ENCODE measurements at regions of chr5 and their contacts with region 1.

Region 1: DNA sequence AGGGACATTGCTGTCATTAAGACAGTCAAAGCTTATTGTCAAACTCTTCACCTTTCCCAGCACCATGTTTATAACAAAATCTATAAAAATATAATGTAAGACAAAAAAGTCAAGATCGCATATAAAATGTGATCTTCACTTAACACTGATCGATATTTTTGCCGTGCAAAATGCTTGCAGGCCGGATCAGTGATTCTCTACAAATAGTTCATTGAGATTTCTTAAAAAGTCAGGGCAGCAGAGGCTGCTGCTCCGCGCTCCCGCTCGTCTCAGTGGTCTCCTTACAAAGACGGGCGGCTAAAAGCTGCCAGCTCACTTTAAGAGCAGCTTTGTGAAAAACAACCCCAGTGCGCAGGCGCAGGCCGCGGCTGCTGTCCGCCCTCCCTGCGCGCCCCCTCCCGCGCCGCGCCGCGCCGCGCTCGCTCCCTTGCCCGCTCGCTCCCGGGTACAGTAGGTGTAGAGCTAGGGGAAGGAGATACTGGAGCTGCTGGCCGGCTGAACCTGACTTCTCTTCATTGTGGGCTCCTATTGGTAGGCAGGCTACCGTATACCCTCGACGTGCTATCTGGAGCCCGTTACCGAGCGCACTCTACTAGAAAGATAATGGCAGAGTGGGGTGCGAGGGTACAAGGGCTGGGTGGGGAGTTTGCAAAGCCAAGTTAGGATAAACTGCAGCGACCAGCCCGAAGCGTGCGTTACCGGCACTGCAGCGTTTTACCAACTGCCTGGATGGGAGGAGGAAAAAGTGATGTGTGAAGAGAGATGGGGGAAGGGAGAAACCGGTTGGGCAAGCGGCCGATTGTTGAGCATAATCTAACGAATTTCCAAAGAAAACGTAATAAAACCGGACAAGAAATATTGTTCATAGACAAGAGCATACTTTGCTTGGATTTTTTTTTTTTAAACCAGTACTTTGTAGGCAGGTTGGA is at the start of gene ARRDC3:
- DNase-seq: peak; percentile 93 to 96
- ATAC-seq: peak; percentile 48 to 70
- H3K4me3 ChIP-seq: peak within 1 kb of the TSS; percentile 67 to 96 (median 85)
- H3K27ac ChIP-seq: peak within 1 kb of the TSS; percentile 90 to 100 (median 94)
- H3K4me1 ChIP-seq: peaks cover 17 to 20% of the 10 kb centered on the region in 2 donors
- H3K27me3 ChIP-seq: no peaks in the 10 kb centered on the region
- CTCF ChIP-seq: peak in 1 of 5 experiments; percentile 24
- POLR2A ChIP-seq: peak; percentile 95 to 98
- total RNA-seq, gene ARRDC3: 64.1 to 116 (median 87.7) TPM

Region 2: DNA sequence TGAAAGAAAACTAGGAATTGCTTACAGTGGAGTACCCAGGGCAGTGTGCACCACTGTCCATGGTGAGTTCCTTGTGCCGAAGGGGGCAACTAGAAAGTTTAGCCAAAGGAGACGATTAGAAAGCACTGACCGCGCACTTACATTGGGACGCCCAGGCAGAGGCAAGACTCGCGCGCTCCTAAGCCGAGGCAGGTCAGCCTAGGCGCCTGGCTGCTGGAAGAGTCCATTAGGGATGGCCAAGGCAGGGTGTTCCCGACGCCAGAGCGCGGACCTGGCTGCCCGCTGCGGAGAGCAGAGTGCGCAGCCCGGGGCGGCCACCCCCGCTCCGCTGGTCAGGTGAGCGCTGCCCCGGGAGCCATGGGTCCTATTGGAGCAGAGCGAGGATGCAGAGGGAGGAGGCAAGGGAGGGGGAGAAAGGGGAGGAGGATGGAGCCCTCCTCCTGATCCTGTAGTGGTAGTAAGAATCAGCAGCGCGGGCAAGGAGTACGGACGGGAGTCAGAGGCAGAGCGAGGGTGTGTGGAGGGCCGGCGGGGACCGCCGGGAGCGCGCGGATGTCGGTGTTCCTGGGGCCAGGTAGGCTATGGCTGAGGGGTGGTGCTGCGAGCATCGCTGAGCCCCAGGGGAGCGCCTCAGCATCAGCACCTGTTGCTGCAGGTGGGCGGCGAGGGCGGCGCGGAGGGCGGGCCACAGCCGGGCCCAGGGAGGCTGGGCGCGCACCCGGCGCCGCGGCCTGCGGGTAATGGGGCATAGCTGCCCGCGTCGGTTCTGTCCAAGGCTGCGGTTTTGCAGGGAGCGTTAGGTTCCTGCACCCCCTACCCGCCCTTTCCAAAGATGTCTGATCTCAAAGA is 824.7 kb before region 1 on chr5 and contains the start of gene ADGRV1:
- in situ Hi-C with region 1: no loop called
- intact Hi-C with region 1: no loop called
- DNase-seq: peak in 1 of 2 donors; percentile 11
- ATAC-seq: peak in 1 of 2 donors; percentile 44
- H3K4me3 ChIP-seq: peak within 1 kb of the TSS; percentile 9 to 46 (median 39)
- H3K27ac ChIP-seq: no peak within 1 kb of the TSS
- H3K4me1 ChIP-seq: peaks cover 7% of the 10 kb centered on the region in 2 donors
- H3K27me3 ChIP-seq: peaks cover 39 to 42% (median 39%) of the 10 kb centered on the region in 3 donors
- CTCF ChIP-seq: no peak
- POLR2A ChIP-seq: no peak
- total RNA-seq, gene ADGRV1: 0.22 to 0.41 TPM in 2 of 4 donors, not detected in the others

Region 3: DNA sequence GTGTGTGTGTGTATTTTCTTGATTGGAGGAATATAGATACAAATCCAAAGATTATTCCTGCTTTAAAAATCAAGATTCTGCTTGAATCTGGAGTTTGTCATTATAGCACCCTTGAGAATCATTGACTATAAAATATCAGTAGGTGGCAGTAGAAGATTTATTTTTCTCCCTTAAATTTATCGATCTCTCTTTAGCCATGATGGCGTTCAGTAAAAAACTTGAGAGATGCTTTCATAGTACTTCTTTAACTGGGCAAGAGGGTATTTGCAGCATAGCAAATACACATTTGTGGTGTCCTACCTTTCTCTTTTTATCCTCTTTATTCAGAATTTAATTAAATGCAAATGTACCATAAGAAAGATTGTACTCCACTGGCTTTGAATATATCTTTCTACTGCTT is 517.0 kb before region 1 on chr5:
- in situ Hi-C with region 1: loop called in 1 of 4 experiments (anchors 10 kb)
- intact Hi-C with region 1: loop called (anchors 1 kb)
- DNase-seq: no peak
- ATAC-seq: peak in 1 of 2 donors; percentile 49
- H3K4me3 ChIP-seq: no peak overlapping the region
- H3K27ac ChIP-seq: no peak overlapping the region
- H3K4me1 ChIP-seq: peaks cover 0 to 27% of the 10 kb centered on the region in 2 donors
- H3K27me3 ChIP-seq: no peaks in the 10 kb centered on the region
- CTCF ChIP-seq: peak in 4 of 5 experiments; percentile 36 to 50 (median 46)
- POLR2A ChIP-seq: no peak

Region 4: DNA sequence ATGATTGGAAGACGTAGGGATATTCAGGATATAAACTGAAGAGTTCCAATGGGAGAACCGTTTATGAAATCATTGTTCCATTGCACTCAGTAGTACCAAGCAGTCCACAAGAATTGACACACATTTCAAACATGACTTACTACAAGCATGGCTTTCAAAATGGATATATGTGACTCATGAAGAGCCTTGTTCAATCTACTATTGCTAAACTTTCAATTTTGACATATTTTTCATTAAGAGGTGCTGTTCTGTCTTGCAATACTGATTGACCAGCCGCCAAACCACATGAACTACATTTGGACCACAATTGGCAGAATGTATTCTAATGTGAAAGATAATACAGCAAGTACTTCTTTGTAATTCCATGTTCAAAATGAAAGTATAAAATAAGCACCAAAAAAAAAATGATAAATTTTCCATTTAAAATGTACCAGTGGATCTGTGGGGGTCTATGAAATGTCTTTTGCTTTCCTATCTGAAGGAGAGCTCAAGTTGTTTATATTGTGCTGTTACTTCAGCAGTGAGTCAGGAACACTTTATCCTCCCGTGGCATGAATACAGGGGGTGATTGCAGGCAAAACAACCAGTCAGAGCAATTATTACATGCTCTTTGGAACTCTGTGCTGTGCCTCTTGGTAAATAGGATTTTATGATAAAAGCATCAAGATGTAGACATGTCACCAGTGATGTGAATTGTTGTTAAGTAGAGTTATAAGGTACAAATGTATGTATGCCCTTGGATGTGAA is 366.2 kb before region 1 on chr5:
- in situ Hi-C with region 1: no loop called
- intact Hi-C with region 1: loop called (anchors 1 kb)
- DNase-seq: peak; percentile 62 to 63
- ATAC-seq: peak; percentile 89 to 94
- H3K4me3 ChIP-seq: peak overlapping the region in 3 of 4 donors; percentile 24 to 32 (median 27)
- H3K27ac ChIP-seq: peak overlapping the region; percentile 70 to 81 (median 76)
- H3K4me1 ChIP-seq: peaks cover 41 to 45% of the 10 kb centered on the region in 2 donors
- H3K27me3 ChIP-seq: no peaks in the 10 kb centered on the region
- CTCF ChIP-seq: no peak
- POLR2A ChIP-seq: no peak

Region 5: DNA sequence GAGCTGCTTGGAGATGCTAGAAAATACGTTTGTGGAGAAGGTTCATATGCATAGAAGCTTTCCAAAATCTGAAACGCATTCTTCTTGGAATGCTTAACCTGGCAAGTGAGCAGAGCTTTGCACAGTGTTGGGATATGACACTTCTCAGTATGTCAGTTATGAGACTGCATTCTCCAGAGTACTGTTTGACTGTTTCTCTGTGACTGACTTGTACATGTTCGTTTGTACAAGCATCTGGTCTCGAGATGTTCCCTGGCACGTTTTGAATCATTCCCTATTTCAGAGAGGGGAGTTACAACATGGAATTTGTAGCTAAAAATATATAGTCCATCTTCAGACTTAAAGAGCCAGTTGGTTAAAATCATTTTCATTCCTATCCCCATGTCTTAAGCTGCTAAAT is 272.6 kb before region 1 on chr5:
- in situ Hi-C with region 1: loop called in 1 of 4 experiments (anchors 5 kb)
- intact Hi-C with region 1: no loop called
- DNase-seq: peak in 1 of 2 donors; percentile 35
- ATAC-seq: peak; percentile 93 to 97
- H3K4me3 ChIP-seq: no peak overlapping the region
- H3K27ac ChIP-seq: peak overlapping the region; percentile 9 to 58 (median 24)
- H3K4me1 ChIP-seq: peaks cover 19 to 20% of the 10 kb centered on the region in 2 donors
- H3K27me3 ChIP-seq: no peaks in the 10 kb centered on the region
- CTCF ChIP-seq: no peak
- POLR2A ChIP-seq: no peak

Region 6: DNA sequence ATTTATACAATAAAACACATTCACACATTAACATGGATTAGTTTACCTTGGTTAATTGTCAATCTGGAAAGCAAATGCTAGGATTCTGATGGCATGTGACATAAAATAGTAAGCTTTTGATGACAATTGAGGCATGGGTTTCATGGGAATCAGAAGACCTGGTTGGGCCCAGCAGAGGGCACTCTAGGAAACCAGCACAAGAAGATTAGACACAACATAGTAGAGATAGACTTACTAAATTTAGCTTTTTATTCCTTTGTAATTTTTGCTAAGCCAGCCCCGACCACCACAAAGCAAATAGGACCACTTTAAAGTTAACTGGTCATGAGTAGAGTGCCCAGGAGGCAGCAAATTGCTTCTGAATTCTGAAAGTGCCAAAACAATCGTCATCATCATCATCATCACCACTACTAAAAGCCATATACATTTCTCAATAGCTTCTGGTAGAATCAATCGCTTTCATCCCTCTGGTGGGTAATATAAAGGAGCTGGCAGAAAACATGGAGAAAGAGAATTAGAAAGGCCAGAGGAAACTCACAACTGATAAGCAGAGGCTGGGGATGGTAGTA is 163.4 kb before region 1 on chr5:
- in situ Hi-C with region 1: loop called in 3 of 4 experiments (anchors 5 to 10 kb)
- intact Hi-C with region 1: no loop called
- DNase-seq: no peak
- ATAC-seq: no peak
- H3K4me3 ChIP-seq: no peak overlapping the region
- H3K27ac ChIP-seq: no peak overlapping the region
- H3K4me1 ChIP-seq: no peaks in the 10 kb centered on the region
- H3K27me3 ChIP-seq: no peaks in the 10 kb centered on the region
- CTCF ChIP-seq: peak in 2 of 5 experiments; percentile 24 to 43
- POLR2A ChIP-seq: no peak

Region 7: GRCh38 chr5:91280362-91281269 is 102.7 kb before region 1 on chr5:
- in situ Hi-C with region 1: no loop called
- intact Hi-C with region 1: loop called (anchors 1 kb)
- DNase-seq: peak; percentile 91 to 93
- ATAC-seq: peak; percentile 96 to 97
- H3K4me3 ChIP-seq: peak overlapping the region; percentile 61 to 75 (median 72)
- H3K27ac ChIP-seq: peak overlapping the region; percentile 89 to 98 (median 94)
- H3K4me1 ChIP-seq: peaks cover 10% of the 10 kb centered on the region in 2 donors
- H3K27me3 ChIP-seq: no peaks in the 10 kb centered on the region
- CTCF ChIP-seq: peak in 1 of 5 experiments; percentile 14
- POLR2A ChIP-seq: peak; percentile 74 to 79

Region 8: GRCh38 chr5:91456928-91457680 is 73.8 kb after region 1 on chr5:
- in situ Hi-C with region 1: no loop called
- intact Hi-C with region 1: no loop called
- DNase-seq: no peak
- ATAC-seq: no peak
- H3K4me3 ChIP-seq: no peak overlapping the region
- H3K27ac ChIP-seq: no peak overlapping the region
- H3K4me1 ChIP-seq: no peaks in the 10 kb centered on the region
- H3K27me3 ChIP-seq: no peaks in the 10 kb centered on the region
- CTCF ChIP-seq: no peak
- POLR2A ChIP-seq: no peak